PC-3 (cell line): ENCODE measurements at regions of chr19 and their contacts with region 1.

Region 1: DNA sequence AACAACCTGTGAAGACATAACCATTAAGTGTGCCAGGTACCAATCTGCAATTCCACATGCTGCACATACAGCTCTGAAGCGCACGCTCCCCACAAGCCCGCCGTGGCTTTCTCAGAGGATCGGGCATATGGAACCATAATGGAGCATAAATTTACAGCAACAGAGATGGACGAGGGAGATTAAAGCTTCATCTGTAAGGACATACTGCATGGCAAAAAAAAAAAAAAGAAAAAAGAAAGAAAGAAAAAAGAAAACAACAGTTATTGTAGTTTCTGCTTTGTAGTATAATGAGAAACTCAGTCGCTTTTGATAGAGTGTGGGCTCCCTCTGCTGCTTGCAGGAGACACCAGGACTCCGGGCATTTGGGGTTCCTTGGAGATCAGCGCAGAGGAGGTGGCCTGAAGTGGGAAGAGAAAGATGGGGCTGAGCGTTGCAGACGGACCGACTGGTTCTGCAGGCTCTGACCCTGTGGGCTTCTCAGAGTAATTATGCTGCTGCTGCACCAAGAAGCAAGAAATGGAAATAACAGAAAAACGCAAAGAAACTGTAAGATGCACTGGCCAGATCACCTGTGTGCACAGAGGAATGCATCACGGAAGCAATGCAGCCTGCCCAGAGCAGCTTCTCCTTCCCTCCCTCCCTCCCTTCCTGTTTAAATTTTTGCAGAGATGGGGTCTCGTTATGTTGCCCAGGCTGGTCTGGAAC is 10.8 kb upstream of the PDCD5 start:
- DNase-seq: peak; percentile 68
- ATAC-seq: peak; percentile 96
- H3K4me3 ChIP-seq: peak overlapping the region; percentile 61
- H3K27ac ChIP-seq: no peak overlapping the region
- H3K4me1 ChIP-seq: no peaks in the 10 kb centered on the region
- H3K27me3 ChIP-seq: no peaks in the 10 kb centered on the region
- CTCF ChIP-seq: peak; percentile 88

Region 2: DNA sequence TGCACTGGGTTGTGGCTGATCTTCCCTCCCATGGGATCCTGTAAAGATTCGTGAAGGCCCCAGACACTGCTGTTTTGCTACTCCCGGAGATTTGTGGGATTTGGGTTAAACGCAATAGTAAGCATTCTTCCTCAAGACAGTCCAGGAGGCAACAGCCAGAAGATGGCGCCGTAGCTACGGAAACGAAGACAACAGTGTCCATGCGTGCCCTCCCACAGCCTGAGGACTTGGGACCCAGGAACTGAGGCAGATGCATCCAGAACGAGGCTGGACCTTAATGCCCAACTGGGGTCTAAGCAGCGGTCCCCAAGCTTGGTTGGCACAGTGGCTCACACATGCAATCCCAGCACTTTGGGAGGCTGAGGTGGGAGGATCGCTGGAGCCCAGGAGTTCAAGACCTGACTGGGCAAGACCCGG is 282.4 kb before region 1 on chr19:
- CTCF ChIA-PET with region 1: interaction called, 5 read pairs
- POLR2A ChIA-PET with region 1: no interaction called
- intact Hi-C with region 1: loop called (anchors 1 kb)
- DNase-seq: peak; percentile 60
- ATAC-seq: peak; percentile 63
- H3K4me3 ChIP-seq: no peak overlapping the region
- H3K27ac ChIP-seq: no peak overlapping the region
- H3K4me1 ChIP-seq: no peaks in the 10 kb centered on the region
- H3K27me3 ChIP-seq: peaks cover 6% of the 10 kb centered on the region; the same call in 1 of the 2 replicates
- CTCF ChIP-seq: peak; percentile 64

Region 3: DNA sequence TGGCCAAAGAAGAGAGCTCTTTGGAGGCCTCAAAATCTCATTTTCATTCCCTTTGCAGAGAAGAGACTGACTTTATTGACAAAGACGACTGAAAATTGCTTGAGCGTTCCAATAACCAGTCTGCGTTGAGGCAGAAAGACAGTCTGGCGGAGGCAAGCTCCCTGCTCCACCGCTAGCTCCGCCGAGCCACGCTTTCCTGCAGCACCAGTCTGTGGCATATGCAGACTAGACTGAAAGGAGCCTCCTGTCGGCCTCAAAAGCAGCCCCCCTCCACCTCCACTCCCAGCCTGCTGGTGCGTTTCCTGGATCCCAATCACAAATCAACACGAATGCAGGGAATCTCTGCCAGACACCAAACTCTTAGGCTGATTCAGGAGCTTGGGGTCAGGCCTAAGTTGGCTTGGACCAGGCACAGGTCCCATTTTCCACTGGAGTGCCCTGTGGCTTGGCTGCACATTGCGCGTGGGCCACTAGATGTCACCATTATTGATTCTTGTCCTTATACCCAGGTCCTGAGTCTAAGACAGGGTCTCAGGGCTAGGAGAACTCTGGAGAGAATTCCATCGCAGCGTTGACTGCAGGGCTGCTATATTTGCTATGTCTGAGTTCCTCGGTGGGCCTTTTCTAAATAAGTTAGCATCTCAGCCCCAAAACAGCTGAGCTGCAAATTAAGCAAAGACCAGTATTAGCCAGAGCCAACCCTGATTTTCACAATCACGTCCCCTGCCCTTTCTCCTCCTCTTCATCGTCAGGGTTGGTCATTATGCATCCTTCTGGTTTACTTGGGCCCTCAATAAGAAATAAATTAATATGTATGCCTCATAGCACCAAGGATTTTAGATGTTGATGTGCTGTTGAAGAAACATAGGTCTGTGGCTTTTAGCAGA is 230.0 kb before region 1 on chr19:
- CTCF ChIA-PET with region 1: no interaction called
- POLR2A ChIA-PET with region 1: no interaction called
- intact Hi-C with region 1: loop called (anchors 1 kb)
- DNase-seq: peak; percentile 60
- ATAC-seq: peak; percentile 78
- H3K4me3 ChIP-seq: no peak overlapping the region
- H3K27ac ChIP-seq: no peak overlapping the region
- H3K4me1 ChIP-seq: peaks cover 11% of the 10 kb centered on the region
- H3K27me3 ChIP-seq: no peaks in the 10 kb centered on the region
- CTCF ChIP-seq: peak; percentile 68

Region 4: GRCh38 chr19:32464279-32464678 is 106.0 kb before region 1 on chr19:
- CTCF ChIA-PET with region 1: interaction called, 3 read pairs
- POLR2A ChIA-PET with region 1: no interaction called
- intact Hi-C with region 1: loop called (anchors 1 kb)
- DNase-seq: peak; percentile 42
- ATAC-seq: no peak
- H3K4me3 ChIP-seq: no peak overlapping the region
- H3K27ac ChIP-seq: no peak overlapping the region
- H3K4me1 ChIP-seq: no peaks in the 10 kb centered on the region
- H3K27me3 ChIP-seq: no peaks in the 10 kb centered on the region
- CTCF ChIP-seq: peak; percentile 53; the same call in 1 of the 2 replicates